Gastrocnemius medialis (tissue), 4 donors: ENCODE measurements at regions of chr2 and their contacts with region 1.

Region 1: DNA sequence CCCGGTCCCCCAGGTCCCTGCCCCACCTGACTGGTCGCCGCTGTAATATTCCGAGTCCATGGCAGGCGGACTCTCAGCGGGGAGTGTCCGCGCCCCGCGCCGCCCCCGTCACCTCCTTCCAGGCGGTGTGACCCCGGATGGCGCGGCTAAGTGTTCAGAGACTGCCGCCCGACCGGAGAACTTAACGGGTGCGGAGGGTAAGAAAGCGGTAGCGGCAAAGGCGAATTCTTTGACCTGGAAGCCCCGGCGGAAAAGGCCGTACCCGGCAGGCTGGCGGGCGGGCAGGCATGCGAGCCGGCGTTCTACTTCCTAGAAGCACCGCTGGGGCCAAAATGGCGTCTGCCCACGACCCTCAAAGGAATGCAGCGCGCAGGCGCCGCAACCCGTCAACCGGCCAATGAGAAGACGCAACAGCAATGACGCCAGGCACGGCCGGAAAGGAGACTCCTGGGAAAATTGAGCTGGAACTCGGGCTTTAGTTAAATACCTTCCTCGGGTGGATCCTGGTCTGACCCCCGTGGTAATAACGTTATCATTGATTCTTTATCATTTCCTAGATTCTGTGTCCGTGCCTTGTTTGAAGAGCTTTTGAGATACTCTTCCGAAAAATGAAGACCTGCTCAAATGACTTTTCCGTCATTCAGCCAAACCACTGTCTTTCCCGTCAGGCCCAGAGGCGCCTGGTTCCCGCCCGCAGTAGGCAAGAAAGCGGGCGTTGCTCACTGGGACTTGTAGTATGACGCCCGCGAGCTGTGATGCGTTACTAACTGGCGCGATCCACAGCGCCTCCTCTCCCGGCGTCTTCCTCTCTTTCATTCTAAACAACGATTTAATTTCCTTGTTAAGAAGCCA is at the start of gene IWS1:
- DNase-seq: peak; percentile 93 to 94
- ATAC-seq: peak; percentile 94 to 97
- H3K4me3 ChIP-seq: peak within 1 kb of the TSS; percentile 87 to 97 (median 92)
- H3K27ac ChIP-seq: peak within 1 kb of the TSS; percentile 94 to 97 (median 96)
- H3K4me1 ChIP-seq: peaks cover 19 to 34% of the 10 kb centered on the region in 2 donors
- H3K27me3 ChIP-seq: no peaks in the 10 kb centered on the region
- CTCF ChIP-seq: peak; percentile 6 to 56 (median 53)
- POLR2A ChIP-seq: peak; percentile 88 to 92
- total RNA-seq, gene IWS1: 50.5 to 77.0 (median 65.3) TPM

Region 2: GRCh38 chr2:127387655-127388422 is 138.5 kb before region 1 on chr2 and contains the start of gene MAP3K2:
- in situ Hi-C with region 1: no loop called
- intact Hi-C with region 1: loop called (anchors 5 kb)
- DNase-seq: peak; percentile 94 to 98
- ATAC-seq: peak; percentile 82 to 84
- H3K4me3 ChIP-seq: peak within 1 kb of the TSS; percentile 77 to 97 (median 94)
- H3K27ac ChIP-seq: peak within 1 kb of the TSS; percentile 99 to 100 (median 100)
- H3K4me1 ChIP-seq: peaks cover 35 to 40% of the 10 kb centered on the region in 2 donors
- H3K27me3 ChIP-seq: no peaks in the 10 kb centered on the region
- CTCF ChIP-seq: peak in 1 of 5 experiments; percentile 11
- POLR2A ChIP-seq: peak; percentile 97 to 99
- total RNA-seq, gene MAP3K2: 33.8 to 46.4 (median 39.4) TPM

Region 3: DNA sequence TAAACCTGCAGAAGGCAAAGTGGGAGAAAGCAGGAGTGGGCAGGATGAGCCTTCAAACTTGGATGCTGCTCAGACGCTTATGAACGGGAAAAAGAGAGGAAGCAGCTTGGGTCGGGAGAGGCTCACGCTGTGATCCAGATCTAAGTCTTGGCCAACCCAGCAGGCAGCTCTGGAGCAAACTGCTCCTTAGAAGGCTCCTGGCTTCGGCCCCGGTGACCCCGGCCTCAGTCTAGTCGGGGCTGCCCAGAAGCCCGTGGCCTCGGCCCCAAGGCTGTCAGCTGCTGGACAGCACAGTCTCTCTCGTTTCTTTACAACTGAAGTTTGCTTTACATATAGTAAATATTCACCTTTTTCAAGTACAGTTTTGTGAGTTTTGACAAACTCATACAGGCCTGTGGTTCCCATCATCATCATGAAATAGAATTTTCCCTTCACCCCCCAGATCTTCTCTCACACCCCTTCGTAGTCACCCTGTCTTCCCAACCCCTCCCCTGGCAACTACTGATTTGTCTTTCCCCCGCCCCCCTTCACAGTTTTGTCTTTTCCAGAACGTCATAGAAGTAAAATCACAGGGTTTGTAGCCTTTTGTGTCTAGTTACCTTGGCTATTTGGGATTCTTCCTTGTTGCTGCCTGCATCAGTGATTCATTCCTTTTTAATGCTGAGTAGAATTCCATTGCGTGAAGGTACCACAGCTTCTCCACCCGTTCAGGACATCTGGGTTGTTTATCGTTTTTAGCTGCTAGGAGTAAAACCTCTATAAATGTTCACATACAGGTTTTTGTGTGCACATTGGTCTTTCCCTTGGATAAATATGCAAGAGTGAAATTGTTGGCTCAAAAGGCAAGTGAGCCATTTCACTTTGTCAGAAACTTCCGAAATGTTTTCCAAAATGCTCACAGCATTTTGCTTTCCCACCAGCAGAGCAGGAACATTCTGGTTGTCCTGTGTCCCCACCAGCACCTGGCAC is 44.2 kb after region 1 on chr2:
- in situ Hi-C with region 1: no loop called
- intact Hi-C with region 1: loop called (anchors 5 kb)
- DNase-seq: no peak
- ATAC-seq: no peak
- H3K4me3 ChIP-seq: no peak overlapping the region
- H3K27ac ChIP-seq: no peak overlapping the region
- H3K4me1 ChIP-seq: peaks cover 41 to 49% of the 10 kb centered on the region in 2 donors
- H3K27me3 ChIP-seq: no peaks in the 10 kb centered on the region
- CTCF ChIP-seq: no peak
- POLR2A ChIP-seq: no peak

Region 4: GRCh38 chr2:127701193-127701650 is 174.8 kb after region 1 on chr2 and contains the start of gene SFT2D3:
- in situ Hi-C with region 1: no loop called
- intact Hi-C with region 1: loop called (anchors 1 kb)
- DNase-seq: peak; percentile 90
- ATAC-seq: peak; percentile 82 to 84
- H3K4me3 ChIP-seq: peak within 1 kb of the TSS; percentile 60 to 72 (median 68)
- H3K27ac ChIP-seq: peak within 1 kb of the TSS; percentile 92 to 95 (median 95)
- H3K4me1 ChIP-seq: peaks cover 36% of the 10 kb centered on the region in 2 donors
- H3K27me3 ChIP-seq: no peaks in the 10 kb centered on the region
- CTCF ChIP-seq: no peak
- POLR2A ChIP-seq: peak; percentile 84 to 87
- total RNA-seq, gene SFT2D3: 3.0 to 5.5 (median 3.5) TPM

Region 5: GRCh38 chr2:127874378-127875271 is 348.2 kb after region 1 on chr2:
- in situ Hi-C with region 1: no loop called
- intact Hi-C with region 1: loop called (anchors 10 kb)
- DNase-seq: no peak
- ATAC-seq: no peak
- H3K4me3 ChIP-seq: no peak overlapping the region
- H3K27ac ChIP-seq: peak overlapping the region in 2 of 4 donors; percentile 16 to 40
- H3K4me1 ChIP-seq: peaks cover 17 to 24% of the 10 kb centered on the region in 2 donors
- H3K27me3 ChIP-seq: no peaks in the 10 kb centered on the region
- CTCF ChIP-seq: no peak
- POLR2A ChIP-seq: no peak